Panc1 (cell line): ENCODE measurements at regions of chr6 and their contacts with region 1.

Region 1: DNA sequence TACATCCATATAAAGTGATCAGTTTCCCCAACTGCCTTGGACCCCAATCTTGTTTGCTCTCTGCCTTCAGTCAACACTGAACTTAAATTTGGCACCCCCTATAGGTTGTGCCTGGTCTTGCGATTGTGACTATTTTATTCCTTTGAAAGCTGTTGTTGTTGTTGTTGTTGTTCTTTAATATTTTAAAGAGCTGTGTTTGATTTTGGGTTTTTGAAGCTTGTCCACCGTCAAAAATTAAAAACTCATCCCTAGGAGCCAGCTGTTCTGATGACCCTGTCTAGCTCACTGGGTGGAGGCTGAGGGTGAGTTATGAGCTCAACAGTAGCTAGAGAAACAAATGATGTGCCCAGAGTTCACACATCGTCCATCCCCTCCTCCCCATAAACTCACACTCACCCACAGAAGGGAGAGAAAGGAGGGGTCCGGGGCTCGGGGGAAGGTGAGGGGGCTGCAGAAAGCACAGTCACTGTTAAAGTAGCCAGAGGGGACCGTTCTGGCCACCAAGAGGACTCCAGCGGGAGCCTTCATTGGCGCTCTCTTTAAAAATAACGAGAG is 4.0 kb downstream of the SIM1 start:
- DNase-seq: no peak
- ATAC-seq: peak; percentile 75
- H3K4me3 ChIP-seq: peak overlapping the region; percentile 46 to 73
- H3K27ac ChIP-seq: no peak overlapping the region
- H3K4me1 ChIP-seq: peaks cover 6% of the 10 kb centered on the region
- H3K27me3 ChIP-seq: peaks cover 7% of the 10 kb centered on the region; the same call in 1 of the 2 replicates
- CTCF ChIP-seq: peak; percentile 72

Region 2: GRCh38 chr6:100217225-100218012 is 243.3 kb before region 1 on chr6:
- CTCF ChIA-PET with region 1: no interaction called
- POLR2A ChIA-PET with region 1: interaction called, 12 read pairs
- in situ Hi-C with region 1: no loop called
- intact Hi-C with region 1: no loop called
- DNase-seq: no peak
- ATAC-seq: no peak
- H3K4me3 ChIP-seq: no peak overlapping the region
- H3K27ac ChIP-seq: no peak overlapping the region
- H3K4me1 ChIP-seq: no peaks in the 10 kb centered on the region
- H3K27me3 ChIP-seq: no peaks in the 10 kb centered on the region; the same call in 1 of the 2 replicates
- CTCF ChIP-seq: no peak

Region 3: GRCh38 chr6:100538086-100538485 is 77.4 kb after region 1 on chr6:
- CTCF ChIA-PET with region 1: no interaction called
- POLR2A ChIA-PET with region 1: no interaction called
- in situ Hi-C with region 1: no loop called
- intact Hi-C with region 1: no loop called
- DNase-seq: no peak
- ATAC-seq: no peak
- H3K4me3 ChIP-seq: no peak overlapping the region
- H3K27ac ChIP-seq: no peak overlapping the region
- H3K4me1 ChIP-seq: no peaks in the 10 kb centered on the region
- H3K27me3 ChIP-seq: no peaks in the 10 kb centered on the region
- CTCF ChIP-seq: no peak

Region 4: DNA sequence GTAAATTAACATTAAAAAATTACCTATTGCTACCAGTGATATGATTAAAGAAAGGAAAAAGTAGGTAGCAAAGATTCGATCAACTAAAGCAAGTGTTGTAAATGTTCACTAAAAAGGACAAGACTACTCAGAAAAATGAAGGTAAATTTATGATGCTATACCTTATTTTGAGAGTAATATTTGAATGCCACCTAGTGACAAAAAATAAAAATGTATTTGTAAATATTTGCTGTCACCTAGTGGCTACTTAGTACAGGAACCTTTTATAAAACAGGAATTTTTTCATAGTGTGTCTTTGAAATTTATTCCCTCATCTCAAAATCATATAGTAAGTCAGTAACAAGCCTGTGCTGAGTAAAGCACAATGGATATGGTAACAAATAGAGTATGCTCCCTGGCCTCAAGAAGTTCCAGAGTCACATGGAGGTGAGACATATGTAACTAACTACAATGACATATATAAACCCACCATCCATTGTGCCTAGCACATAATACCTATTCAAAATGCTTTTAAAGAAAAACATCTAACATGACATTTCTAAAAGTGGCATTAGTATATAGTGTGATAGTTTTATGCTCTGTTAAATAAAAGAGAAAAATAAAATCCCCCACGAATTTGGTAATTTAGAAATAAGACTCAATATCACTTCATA is 197.1 kb after region 1 on chr6:
- CTCF ChIA-PET with region 1: no interaction called
- POLR2A ChIA-PET with region 1: no interaction called
- in situ Hi-C with region 1: no loop called
- intact Hi-C with region 1: no loop called
- DNase-seq: peak; percentile 48
- ATAC-seq: peak; percentile 34; the same call in 1 of the 2 replicates
- H3K4me3 ChIP-seq: no peak overlapping the region
- H3K27ac ChIP-seq: no peak overlapping the region
- H3K4me1 ChIP-seq: no peaks in the 10 kb centered on the region
- H3K27me3 ChIP-seq: no peaks in the 10 kb centered on the region
- CTCF ChIP-seq: peak; percentile 68; the same call in 1 of the 2 replicates

Region 5: DNA sequence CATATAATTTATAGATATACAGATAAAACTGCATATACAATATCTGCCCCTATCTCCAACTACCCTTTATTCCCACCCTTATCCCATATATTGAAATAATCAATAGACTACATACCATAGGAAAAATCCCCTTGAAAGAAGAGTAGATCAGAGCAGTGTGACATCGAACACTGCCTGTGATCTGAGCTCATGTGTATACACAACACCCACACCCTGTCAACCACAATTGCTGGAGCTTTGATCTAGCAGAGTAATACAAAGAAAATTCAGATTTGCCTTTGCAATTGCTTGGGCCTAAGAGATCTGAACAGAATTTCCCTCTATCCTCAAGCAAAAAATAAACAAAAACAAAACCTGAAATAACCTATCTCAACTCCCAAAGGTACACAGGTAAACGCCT is 301.1 kb after region 1 on chr6:
- CTCF ChIA-PET with region 1: no interaction called
- POLR2A ChIA-PET with region 1: no interaction called
- in situ Hi-C with region 1: no loop called
- intact Hi-C with region 1: no loop called
- DNase-seq: no peak
- ATAC-seq: no peak
- H3K4me3 ChIP-seq: no peak overlapping the region
- H3K27ac ChIP-seq: no peak overlapping the region
- H3K4me1 ChIP-seq: no peaks in the 10 kb centered on the region
- H3K27me3 ChIP-seq: no peaks in the 10 kb centered on the region
- CTCF ChIP-seq: no peak